ENCODE measurements at regions of chr16 and their contacts with region 1.

Region 1: GRCh38 chr16:21656795-21657768 is 4.7 kb upstream of the IGSF6 start:
- DNase-seq: peak; percentile 60 to 69 (median 66)
- H3K4me3 ChIP-seq: no peak overlapping the region
- H3K4me3 Mint-ChIP-seq: peak overlapping the region in 5 of 8 donors; percentile 32 to 59 (median 49)
- H3K27ac ChIP-seq: no peak overlapping the region
- H3K27ac Mint-ChIP-seq: peak overlapping the region in 6 of 7 donors; percentile 1 to 86 (median 75)
- H3K4me1 ChIP-seq: peaks cover 32% of the 10 kb centered on the region
- H3K4me1 Mint-ChIP-seq: peaks cover 31 to 50% (median 40%) of the 10 kb centered on the region in 4 donors
- H3K27me3 ChIP-seq: no peaks in the 10 kb centered on the region
- H3K27me3 Mint-ChIP-seq: no peaks in the 10 kb centered on the region

Region 2: DNA sequence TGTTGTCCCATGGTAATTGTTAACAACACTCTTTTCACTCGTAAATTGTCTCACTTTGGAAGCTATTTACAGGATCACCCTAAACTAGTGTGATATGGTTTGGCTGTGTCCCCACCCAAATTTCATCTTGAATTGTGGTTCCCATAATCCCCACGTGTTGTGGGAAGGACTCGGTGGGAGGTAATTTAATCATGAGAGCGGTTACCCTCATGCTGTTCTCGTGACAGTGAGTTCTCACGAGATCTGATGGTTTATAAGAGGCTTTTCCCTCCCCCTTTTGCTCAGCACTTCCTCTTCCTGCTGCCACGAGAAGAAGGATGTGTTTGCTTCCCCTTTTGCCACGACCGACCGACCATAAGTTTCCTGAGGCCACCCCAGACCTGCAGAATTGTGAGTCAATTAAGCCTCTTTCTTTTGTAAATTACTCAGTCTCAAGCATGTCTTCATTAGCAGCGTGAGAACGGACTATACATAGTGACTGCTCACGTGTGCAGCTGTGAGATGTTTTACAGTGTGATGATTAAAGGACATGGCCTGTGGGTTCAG is 540.9 kb before region 1 on chr16:
- CTCF ChIA-PET with region 1: no interaction called
- POLR2A ChIA-PET with region 1: no interaction called
- intact Hi-C with region 1: no loop called
- DNase-seq: no peak
- H3K4me3 ChIP-seq: no peak overlapping the region
- H3K4me3 Mint-ChIP-seq: peak overlapping the region; percentile 79 to 89 (median 84)
- H3K27ac ChIP-seq: no peak overlapping the region
- H3K27ac Mint-ChIP-seq: peak overlapping the region in 5 of 7 donors; percentile 0 to 81 (median 77)
- H3K4me1 ChIP-seq: no peaks in the 10 kb centered on the region
- H3K4me1 Mint-ChIP-seq: peaks cover 7 to 12% (median 9%) of the 10 kb centered on the region in 4 donors
- H3K27me3 ChIP-seq: no peaks in the 10 kb centered on the region
- H3K27me3 Mint-ChIP-seq: no peaks in the 10 kb centered on the region

Region 3: DNA sequence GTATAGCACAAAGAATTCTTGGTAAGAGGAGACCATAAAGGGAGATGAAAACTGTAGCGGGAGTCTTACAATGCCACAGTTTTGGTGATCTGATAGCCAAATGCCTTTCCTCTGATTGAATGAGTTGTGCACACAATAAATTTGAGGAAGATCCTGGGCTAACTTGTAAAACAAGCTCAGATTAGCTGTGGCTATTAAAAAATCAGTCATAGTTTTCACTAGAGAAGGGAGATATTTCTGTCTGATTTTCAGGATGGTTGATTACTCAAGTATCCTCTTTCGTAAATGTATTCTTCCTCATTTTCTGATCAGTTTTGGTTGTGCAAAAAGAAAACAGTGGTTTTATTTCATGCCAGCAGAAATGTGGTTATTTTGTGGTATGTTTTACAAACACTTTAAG is 66.8 kb before region 1 on chr16:
- CTCF ChIA-PET with region 1: interaction called, 14 read pairs
- POLR2A ChIA-PET with region 1: interaction called, 3 read pairs
- intact Hi-C with region 1: no loop called
- DNase-seq: no peak
- H3K4me3 ChIP-seq: no peak overlapping the region
- H3K4me3 Mint-ChIP-seq: no peak overlapping the region
- H3K27ac ChIP-seq: no peak overlapping the region
- H3K27ac Mint-ChIP-seq: no peak overlapping the region
- H3K4me1 ChIP-seq: no peaks in the 10 kb centered on the region
- H3K4me1 Mint-ChIP-seq: no peaks in the 10 kb centered on the region
- H3K27me3 ChIP-seq: no peaks in the 10 kb centered on the region
- H3K27me3 Mint-ChIP-seq: peaks cover 0 to 1% of the 10 kb centered on the region in 2 donors

Region 4: DNA sequence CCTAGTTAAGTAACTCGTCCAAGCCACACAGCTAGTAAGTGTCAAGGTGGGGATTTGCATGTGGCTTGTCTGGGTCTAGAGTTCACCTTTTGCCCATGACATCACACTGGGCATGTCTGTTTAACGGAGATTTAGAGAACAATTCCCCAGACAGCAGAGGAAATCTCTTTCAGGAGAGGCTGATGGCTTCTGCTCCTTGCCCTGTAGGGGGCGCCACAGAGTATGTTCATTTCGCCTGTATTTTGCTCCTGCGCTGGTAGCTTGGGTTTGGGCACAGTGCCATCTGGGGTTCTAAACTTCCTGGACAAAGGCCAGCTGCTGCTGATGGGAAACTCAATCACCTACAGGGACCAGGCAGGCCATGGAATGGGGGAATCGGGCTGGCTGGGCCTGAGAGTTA is 27.1 kb after region 1 on chr16:
- CTCF ChIA-PET with region 1: interaction called, 22 read pairs
- POLR2A ChIA-PET with region 1: interaction called, 3 read pairs
- intact Hi-C with region 1: no loop called
- DNase-seq: peak in 4 of 5 donors; percentile 6 to 23 (median 12)
- H3K4me3 ChIP-seq: no peak overlapping the region
- H3K4me3 Mint-ChIP-seq: no peak overlapping the region
- H3K27ac ChIP-seq: no peak overlapping the region
- H3K27ac Mint-ChIP-seq: no peak overlapping the region
- H3K4me1 ChIP-seq: no peaks in the 10 kb centered on the region
- H3K4me1 Mint-ChIP-seq: no peaks in the 10 kb centered on the region
- H3K27me3 ChIP-seq: no peaks in the 10 kb centered on the region
- H3K27me3 Mint-ChIP-seq: peaks cover 4 to 6% of the 10 kb centered on the region in 2 donors

Region 5: GRCh38 chr16:22123146-22123545 is 466.1 kb after region 1 on chr16:
- CTCF ChIA-PET with region 1: no interaction called
- POLR2A ChIA-PET with region 1: no interaction called
- intact Hi-C with region 1: no loop called
- DNase-seq: no peak
- H3K4me3 ChIP-seq: no peak overlapping the region
- H3K4me3 Mint-ChIP-seq: no peak overlapping the region
- H3K27ac ChIP-seq: no peak overlapping the region
- H3K27ac Mint-ChIP-seq: no peak overlapping the region
- H3K4me1 ChIP-seq: no peaks in the 10 kb centered on the region
- H3K4me1 Mint-ChIP-seq: no peaks in the 10 kb centered on the region
- H3K27me3 ChIP-seq: no peaks in the 10 kb centered on the region
- H3K27me3 Mint-ChIP-seq: peaks cover 0 to 2% of the 10 kb centered on the region in 2 donors

Measured in CD4-positive, alpha-beta memory T cell (primary cell).